ENCODE measurements at regions of chr3 and their contacts with region 1.

Region 1: DNA sequence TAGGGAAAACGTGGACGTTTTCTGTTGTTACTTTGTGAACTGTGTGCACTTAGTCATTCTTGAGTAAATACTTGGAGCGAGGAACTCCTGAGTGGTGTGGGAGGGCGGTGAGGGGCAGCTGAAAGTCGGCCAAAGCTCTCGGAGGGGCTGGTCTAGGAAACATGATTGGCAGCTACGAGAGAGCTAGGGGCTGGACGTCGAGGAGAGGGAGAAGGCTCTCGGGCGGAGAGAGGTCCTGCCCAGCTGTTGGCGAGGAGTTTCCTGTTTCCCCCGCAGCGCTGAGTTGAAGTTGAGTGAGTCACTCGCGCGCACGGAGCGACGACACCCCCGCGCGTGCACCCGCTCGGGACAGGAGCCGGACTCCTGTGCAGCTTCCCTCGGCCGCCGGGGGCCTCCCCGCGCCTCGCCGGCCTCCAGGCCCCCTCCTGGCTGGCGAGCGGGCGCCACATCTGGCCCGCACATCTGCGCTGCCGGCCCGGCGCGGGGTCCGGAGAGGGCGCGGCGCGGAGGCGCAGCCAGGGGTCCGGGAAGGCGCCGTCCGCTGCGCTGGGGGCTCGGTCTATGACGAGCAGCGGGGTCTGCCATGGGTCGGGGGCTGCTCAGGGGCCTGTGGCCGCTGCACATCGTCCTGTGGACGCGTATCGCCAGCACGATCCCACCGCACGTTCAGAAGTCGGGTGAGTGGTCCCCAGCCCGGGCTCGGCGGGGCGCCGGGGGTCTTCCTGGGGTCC is at the start of gene TGFBR2:
- DNase-seq: peak; percentile 97
- ATAC-seq: peak; percentile 95
- total RNA-seq, gene TGFBR2: 168 TPM

Region 2: GRCh38 chr3:30353711-30354467 is 252.6 kb before region 1 on chr3:
- intact Hi-C with region 1: loop called (anchors 10 kb)
- DNase-seq: no peak
- ATAC-seq: peak; percentile 62

Region 3: DNA sequence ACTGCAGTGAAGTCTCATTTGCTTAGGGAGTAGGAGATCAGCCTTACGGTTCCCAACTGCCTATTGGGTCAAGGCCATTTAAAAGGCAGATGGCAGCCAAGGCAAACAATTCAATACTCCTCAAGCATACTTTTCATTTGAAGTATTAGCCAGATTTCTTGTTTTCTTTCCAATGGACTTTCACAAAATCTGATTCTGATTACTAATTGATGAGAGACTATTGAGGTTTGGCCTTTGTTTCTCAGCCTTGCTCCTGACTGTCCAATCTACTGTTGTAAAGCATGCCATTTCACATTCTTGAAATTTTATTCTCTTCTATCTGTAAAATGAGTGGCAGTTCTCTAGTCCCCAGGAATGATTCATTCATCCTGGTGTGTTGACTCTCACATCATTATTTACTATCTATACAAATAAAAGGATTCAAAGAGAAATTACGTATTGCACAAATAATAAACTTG is 166.3 kb before region 1 on chr3:
- intact Hi-C with region 1: loop called (anchors 10 kb)
- DNase-seq: no peak
- ATAC-seq: peak; percentile 30

Region 4: DNA sequence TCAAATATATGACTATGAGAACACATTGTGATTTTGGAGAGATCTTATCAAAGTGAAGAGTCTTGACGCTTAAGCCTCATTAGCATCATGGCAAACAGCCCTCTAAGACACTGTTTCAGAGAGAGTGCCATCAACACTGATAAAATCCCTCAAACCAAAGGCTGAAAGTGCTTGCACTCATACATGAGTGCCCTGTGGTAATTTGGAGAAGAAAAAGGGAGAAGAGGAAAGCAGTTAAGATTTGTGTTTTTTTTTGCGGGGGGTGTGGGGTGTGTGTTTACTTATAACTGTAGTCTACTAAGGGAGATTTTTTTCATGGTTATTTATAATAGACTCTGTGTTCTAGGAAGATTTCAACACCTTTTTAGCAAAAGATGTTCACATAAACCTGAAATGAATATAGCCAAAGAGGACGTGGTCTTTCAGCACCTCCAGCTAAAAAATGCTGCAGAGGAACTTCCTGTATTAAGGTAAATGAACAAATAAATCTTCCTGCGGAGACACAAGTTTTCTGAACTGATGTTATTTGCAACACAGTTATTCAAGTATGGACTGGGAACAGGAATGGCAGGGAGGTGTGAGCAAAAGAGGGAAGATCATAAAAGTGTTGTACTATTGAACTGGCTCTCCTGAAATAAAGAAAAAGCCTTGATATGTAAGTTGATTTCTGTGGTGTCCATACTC is 82.0 kb before region 1 on chr3:
- intact Hi-C with region 1: loop called (anchors 5 kb)
- DNase-seq: no peak
- ATAC-seq: peak; percentile 19

Region 5: DNA sequence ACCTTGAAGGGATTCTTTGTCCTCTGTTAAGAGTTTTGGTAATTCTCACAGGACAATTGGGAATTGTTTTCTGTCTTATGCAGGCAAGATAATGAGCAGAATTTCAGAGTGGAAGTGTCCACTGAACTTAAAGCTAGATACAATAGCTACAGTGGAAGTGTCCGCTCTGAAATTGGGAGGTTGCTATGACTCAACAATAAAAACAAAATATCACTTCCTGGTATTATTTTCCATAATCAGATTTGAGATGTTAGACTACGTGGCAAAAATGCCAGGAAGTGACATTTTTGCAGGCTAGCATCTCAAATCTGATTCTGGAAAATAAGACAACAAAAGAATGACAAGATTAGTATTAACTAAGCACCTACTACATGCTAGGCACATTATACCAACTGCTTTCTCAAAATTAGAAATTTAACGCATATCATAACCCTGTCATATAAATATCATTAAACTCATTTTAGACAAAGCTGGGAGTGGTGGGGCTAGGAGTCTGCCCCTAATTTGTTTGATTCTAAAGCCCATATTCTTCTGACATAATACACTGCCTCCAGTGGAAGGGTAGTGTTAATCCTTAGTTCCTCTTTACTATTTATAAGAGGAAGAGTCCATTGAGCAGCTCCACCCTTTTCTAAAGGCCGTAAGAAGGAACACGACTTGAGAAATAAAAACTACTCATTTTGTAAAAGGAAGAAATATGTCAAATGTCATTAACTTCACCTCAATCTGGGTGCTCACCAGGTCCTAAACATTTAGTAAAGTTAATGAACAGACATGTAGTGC is 659.4 kb after region 1 on chr3:
- intact Hi-C with region 1: no loop called
- DNase-seq: no peak
- ATAC-seq: no peak